ENCODE measurements at regions of chr2 and their contacts with region 1.

Region 1: GRCh38 chr2:101419096-101419663 is 31.9 kb upstream of the CREG2 start:
- DNase-seq: peak; percentile 58
- H3K4me3 Mint-ChIP-seq: no peak overlapping the region
- H3K27ac Mint-ChIP-seq: no peak overlapping the region
- H3K4me1 Mint-ChIP-seq: no peaks in the 10 kb centered on the region
- H3K27me3 Mint-ChIP-seq: no peaks in the 10 kb centered on the region

Region 2: GRCh38 chr2:101387151-101387807 is 31.9 kb before region 1 on chr2 and contains the start of gene CREG2:
- CTCF ChIA-PET with region 1: interaction called, 12 read pairs
- POLR2A ChIA-PET with region 1: no interaction called
- intact Hi-C with region 1: no loop called
- DNase-seq: peak; percentile 70
- H3K4me3 Mint-ChIP-seq: peak within 1 kb of the TSS; percentile 52
- H3K27ac Mint-ChIP-seq: no peak within 1 kb of the TSS
- H3K4me1 Mint-ChIP-seq: peaks cover 11% of the 10 kb centered on the region
- H3K27me3 Mint-ChIP-seq: peaks cover 32% of the 10 kb centered on the region
- total RNA-seq, gene CREG2: not detected

Region 3: GRCh38 chr2:101518578-101519492 is 99.7 kb after region 1 on chr2:
- CTCF ChIA-PET with region 1: no interaction called
- POLR2A ChIA-PET with region 1: no interaction called
- intact Hi-C with region 1: loop called (anchors 10 kb)
- DNase-seq: no peak
- H3K4me3 Mint-ChIP-seq: no peak overlapping the region
- H3K27ac Mint-ChIP-seq: no peak overlapping the region
- H3K4me1 Mint-ChIP-seq: peaks cover 28% of the 10 kb centered on the region
- H3K27me3 Mint-ChIP-seq: no peaks in the 10 kb centered on the region

Region 4: DNA sequence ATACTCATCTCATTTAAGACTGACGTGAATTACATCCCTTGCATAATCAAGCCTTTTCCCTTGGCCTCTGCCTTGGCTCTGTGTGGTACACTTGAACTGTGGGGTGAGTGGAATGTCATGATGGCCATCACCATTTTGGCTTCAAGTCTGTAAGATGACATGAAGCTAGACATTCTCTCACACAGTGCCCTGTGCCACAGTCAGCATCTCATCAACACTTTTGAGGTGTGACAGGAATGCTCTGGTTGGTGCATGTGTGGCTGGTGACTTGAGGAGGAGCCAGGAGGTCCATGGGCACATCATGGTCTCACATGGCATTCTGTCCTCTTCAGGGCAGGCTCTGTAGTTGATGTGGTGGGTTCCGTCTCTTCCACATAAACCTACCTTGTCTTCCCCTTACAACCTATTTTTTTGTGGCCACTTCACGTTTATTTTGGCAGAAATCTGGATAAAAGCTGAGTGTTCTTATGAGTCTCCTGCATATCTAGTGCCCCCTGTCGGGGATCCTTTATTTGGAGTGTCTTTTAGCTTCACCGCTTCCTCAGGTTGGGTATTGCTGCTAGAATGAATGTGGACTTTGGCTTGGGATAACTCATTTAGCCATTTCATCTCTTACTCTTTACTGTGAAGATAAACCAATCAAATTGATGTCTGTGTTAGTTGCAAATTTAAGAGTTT is 306.5 kb after region 1 on chr2:
- CTCF ChIA-PET with region 1: interaction called, 14 read pairs
- POLR2A ChIA-PET with region 1: no interaction called
- intact Hi-C with region 1: loop called (anchors 5 kb)
- DNase-seq: no peak
- H3K4me3 Mint-ChIP-seq: no peak overlapping the region
- H3K27ac Mint-ChIP-seq: no peak overlapping the region
- H3K4me1 Mint-ChIP-seq: peaks cover 88% of the 10 kb centered on the region
- H3K27me3 Mint-ChIP-seq: no peaks in the 10 kb centered on the region

Region 5: GRCh38 chr2:101823347-101823791 is 404.2 kb after region 1 on chr2:
- CTCF ChIA-PET with region 1: interaction called, 137 read pairs
- POLR2A ChIA-PET with region 1: no interaction called
- intact Hi-C with region 1: no loop called
- DNase-seq: peak; percentile 81
- H3K4me3 Mint-ChIP-seq: peak overlapping the region; percentile 48
- H3K27ac Mint-ChIP-seq: peak overlapping the region; percentile 72
- H3K4me1 Mint-ChIP-seq: peaks cover 68% of the 10 kb centered on the region
- H3K27me3 Mint-ChIP-seq: no peaks in the 10 kb centered on the region

Region 6: GRCh38 chr2:101831351-101831865 is 412.2 kb after region 1 on chr2:
- CTCF ChIA-PET with region 1: interaction called, 137 read pairs
- POLR2A ChIA-PET with region 1: no interaction called
- intact Hi-C with region 1: loop called (anchors 1 kb)
- DNase-seq: peak; percentile 76
- H3K4me3 Mint-ChIP-seq: no peak overlapping the region
- H3K27ac Mint-ChIP-seq: peak overlapping the region; percentile 71
- H3K4me1 Mint-ChIP-seq: peaks cover 52% of the 10 kb centered on the region
- H3K27me3 Mint-ChIP-seq: no peaks in the 10 kb centered on the region

Region 7: DNA sequence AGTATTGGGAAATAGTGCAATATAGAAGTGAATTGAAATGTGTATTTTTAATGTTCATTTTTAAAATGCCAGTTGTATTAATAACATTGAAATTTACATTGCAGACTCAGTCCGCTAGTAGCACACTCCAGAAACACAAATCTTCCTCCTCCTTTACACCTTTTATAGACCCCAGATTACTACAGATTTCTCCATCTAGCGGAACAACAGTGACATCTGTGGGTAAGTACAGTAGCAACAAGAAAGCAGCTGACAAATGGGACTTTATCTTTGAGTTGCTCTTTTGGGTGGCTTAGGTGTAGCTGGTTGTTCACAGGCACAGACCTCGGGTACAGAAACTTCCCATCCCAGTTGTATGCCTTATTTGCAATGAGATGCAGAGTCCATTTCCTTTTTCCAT is 454.4 kb after region 1 on chr2:
- CTCF ChIA-PET with region 1: interaction called, 10 read pairs
- POLR2A ChIA-PET with region 1: no interaction called
- intact Hi-C with region 1: loop called (anchors 1 kb)
- DNase-seq: no peak
- H3K4me3 Mint-ChIP-seq: no peak overlapping the region
- H3K27ac Mint-ChIP-seq: no peak overlapping the region
- H3K4me1 Mint-ChIP-seq: peaks cover 7% of the 10 kb centered on the region
- H3K27me3 Mint-ChIP-seq: no peaks in the 10 kb centered on the region

Measured in activated CD4-positive, alpha-beta memory T cell treated with anti-CD3 and anti-CD28 coated beads for 36 hours (primary cell).